Right ventricle myocardium inferior (tissue), 1 donor: ENCODE measurements at regions of chr2 and their contacts with region 1.

Region 1: DNA sequence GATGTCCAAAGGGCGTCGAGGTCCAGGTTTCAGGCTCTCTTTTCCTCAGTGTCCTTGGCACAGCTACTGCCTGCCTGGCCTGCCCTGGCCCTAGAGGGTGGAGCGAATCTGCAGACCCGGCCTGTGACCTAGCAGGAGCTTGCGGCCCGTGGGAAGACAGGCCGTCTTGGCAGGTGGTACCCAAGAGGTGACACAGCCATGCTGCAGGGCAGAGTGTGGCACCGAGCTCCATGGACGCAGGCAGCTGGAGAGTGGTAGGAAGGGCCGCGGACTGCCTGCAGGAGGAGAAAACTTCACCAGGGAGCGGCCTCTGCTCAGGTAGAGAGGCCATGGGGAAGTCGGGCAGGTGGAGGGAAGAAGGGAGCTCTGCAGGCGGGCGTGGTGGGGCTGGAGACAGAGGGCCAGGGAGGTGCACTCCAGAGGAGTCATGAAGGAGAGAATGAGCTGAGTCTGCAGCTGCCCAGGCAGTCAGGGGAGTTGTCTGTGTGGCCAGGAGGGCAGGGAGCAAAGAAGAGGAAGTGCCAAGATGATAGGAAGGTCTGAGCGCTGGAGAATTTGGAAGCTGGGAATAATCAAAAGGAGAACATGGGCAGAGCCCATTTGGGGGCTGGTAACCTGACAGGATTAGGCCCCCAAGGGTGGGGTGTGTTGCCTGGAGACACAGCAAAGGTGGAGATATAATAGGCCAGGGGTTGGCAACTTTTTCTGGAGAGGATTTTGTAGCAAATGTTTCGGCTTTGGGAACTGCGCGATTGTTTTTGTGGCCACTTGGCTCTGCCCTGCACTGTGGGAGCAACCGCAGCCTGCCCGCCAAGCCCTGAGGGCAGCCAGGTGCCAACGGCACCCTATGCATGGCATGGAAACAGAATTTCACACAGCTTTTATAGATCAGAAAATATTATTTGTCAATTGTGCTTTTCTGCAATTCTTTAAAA is 154.4 kb upstream of the PXDN start:
- DNase-seq: no peak
- ATAC-seq: no peak

Region 2: DNA sequence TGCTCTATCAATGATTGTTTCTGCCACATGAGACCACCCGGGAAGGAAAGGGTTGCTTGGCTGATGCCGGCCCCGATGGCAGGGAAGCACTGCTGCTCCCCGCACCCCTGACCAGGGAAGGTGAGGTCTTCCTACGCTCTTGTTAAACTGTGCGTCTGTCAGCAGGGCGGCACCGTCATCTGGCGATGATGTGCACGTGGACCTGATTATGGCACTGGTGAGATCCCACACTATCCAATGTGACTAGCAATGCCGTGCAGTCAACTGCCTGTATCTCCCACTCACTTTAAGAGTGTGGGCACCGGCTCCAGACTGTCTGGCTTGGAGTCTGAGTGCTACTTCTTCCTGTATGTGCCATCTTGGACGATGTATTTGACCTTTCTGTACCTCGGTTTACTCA is 223.2 kb after region 1 on chr2:
- intact Hi-C with region 1: loop called (anchors 5 kb)
- DNase-seq: no peak
- ATAC-seq: no peak